ENCODE measurements at regions of chr19 and their contacts with region 1.

Region 1: DNA sequence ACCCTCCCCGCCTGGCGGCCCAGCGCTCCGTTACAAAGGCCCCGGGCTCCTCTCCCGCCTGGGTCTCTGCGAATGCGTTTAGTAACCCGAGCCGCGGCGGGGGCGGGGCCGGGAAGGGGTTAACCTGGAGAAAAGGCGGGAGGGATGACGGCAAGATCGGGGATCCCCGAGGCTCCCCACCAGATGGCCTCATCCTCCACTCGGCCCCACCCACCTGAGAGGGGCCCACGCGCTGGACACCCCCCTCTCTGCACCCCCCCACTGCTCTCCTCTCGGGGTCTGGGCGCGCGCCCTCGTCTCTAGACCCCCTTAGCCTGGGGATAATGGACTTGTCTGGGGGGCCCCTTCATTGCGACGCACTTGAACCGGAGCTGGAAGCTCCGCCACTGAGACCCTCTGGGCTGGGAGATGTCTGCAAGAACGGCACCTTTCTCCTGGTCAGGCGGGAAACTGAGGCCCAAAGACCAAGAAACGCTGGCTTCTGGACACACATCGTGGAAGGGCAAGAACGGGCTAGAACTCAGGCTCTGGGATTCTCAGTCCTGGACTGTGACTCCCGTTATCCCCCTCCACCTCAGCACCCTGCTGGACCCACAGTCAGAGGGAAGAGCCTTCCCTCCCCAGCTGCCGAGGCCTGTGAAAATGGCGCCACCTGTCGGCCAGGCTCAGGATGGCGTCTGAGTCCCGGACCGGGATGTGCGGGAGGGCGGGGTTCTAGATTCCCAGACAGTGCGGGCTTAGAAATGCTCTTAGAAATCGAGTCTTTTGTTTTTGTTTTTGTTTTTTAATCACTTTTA is 2.9 kb upstream of the LTBP4 start:
- DNase-seq: peak; percentile 88 to 93
- H3K4me3 ChIP-seq: no peak overlapping the region
- H3K27ac ChIP-seq: no peak overlapping the region
- H3K4me1 ChIP-seq: peaks cover 0 to 65% (median 58%) of the 10 kb centered on the region in 4 donors
- H3K27me3 ChIP-seq: peaks cover 0 to 15% of the 10 kb centered on the region in 2 donors
- CTCF ChIP-seq: peak; percentile 96 to 98

Region 2: DNA sequence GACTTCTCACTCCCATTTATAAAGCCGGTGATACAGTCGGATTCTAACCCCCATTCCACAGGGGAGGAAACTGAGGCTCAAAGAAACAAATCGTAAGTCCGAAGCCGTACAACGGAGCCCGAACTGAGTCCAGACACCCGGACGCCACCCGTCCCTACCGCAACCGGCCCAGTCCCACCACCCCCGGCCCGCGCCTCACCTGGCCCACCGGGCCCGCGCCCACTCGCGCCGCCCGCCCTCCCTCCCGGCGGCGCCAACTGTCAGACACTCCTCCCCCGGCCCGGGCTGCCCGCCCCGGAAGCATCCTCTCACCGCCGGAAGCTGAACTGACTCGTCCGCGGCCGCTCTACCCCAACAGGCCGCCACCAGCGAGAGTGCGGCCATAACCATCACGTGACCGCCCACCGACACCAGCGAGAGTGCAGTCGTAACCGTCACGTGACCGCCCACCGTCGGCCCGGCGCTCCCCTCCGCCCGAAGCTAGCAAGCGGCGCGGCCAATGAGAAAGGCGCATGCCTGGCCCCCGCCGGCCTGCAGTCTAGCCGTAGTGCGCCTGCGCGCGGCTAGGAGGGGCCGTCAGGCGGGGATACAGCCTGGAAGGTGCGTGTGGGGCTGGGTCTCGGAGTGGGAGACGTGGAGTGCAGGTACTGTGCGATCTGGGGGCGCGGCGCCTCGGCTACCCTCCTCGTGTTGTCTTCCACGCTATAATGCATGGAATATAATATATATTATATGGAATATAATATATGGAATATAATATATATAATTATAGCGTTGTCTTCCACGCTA is 250.0 kb before region 1 on chr19 and contains the starts of genes C19orf47 and PLD3:
- intact Hi-C with region 1: no loop called
- DNase-seq: peak; percentile 100
- H3K4me3 ChIP-seq: peak within 1 kb of the TSS; percentile 58 to 68
- H3K27ac ChIP-seq: peak within 1 kb of the TSS; percentile 61 to 81
- H3K4me1 ChIP-seq: peaks cover 0 to 39% (median 10%) of the 10 kb centered on the region in 4 donors
- H3K27me3 ChIP-seq: no peaks in the 10 kb centered on the region
- CTCF ChIP-seq: peak in 1 of 2 experiments; percentile 48

Region 3: GRCh38 chr19:40465557-40466150 is 132.7 kb before region 1 on chr19 and contains the start of gene BLVRB:
- intact Hi-C with region 1: loop called (anchors 10 kb)
- DNase-seq: peak; percentile 100
- H3K4me3 ChIP-seq: peak within 1 kb of the TSS; percentile 67 to 82
- H3K27ac ChIP-seq: peak within 1 kb of the TSS; percentile 90 to 92
- H3K4me1 ChIP-seq: peaks cover 0 to 39% (median 30%) of the 10 kb centered on the region in 4 donors
- H3K27me3 ChIP-seq: no peaks in the 10 kb centered on the region
- CTCF ChIP-seq: no peak

Region 4: GRCh38 chr19:40529093-40529954 is 69.0 kb before region 1 on chr19:
- intact Hi-C with region 1: loop called (anchors 5 kb)
- DNase-seq: peak; percentile 76 to 88
- H3K4me3 ChIP-seq: peak overlapping the region; percentile 49 to 52
- H3K27ac ChIP-seq: peak overlapping the region in 1 of 2 donors; percentile 23
- H3K4me1 ChIP-seq: peaks cover 0 to 21% (median 15%) of the 10 kb centered on the region in 4 donors
- H3K27me3 ChIP-seq: peaks cover 0 to 5% of the 10 kb centered on the region in 2 donors
- CTCF ChIP-seq: peak; percentile 97 to 98

Measured in tibial artery (tissue), 4 donors.